Naive thymus-derived CD4-positive, alpha-beta T cell (primary cell): ENCODE measurements at regions of chr7 and their contacts with region 1.

Region 1: DNA sequence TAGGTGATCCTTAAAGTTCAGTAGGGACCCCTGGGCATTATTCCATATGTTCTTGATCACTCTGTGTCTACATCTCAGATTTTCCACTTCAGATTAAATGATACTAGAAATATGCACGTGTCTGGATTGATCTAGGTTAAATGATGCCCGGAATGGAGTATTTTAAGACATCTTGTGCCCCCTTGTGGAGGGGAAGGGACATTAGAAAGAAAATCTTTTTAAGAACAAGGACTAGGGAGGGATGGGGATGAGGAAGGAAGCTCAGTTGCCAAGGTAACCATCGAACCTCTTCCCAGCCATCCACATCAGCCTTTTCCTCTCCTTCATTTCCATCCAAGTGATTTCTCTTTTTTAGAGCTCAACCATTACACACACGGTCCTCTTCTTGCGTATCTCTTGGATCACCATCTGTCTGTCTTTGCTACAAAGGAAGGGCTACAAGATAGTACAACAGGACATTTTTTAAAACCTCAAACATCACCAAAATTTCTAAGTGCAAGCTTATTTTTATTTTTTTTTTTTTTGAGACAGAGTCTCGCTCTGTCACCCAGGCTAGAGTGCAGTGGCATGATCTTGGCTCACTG is 40.5 kb downstream of the PRSS2 start:
- DNase-seq: peak in 7 of 9 donors; percentile 73 to 86 (median 79)
- ATAC-seq: peak; percentile 19
- H3K4me3 ChIP-seq: no peak overlapping the region
- H3K4me3 Mint-ChIP-seq: peak overlapping the region; percentile 58 to 100 (median 76)
- H3K27ac ChIP-seq: peak overlapping the region; percentile 98
- H3K27ac Mint-ChIP-seq: peak overlapping the region; percentile 92 to 100 (median 100)
- H3K4me1 ChIP-seq: peaks cover 47 to 89% of the 10 kb centered on the region in 2 donors
- H3K4me1 Mint-ChIP-seq: peaks cover 57 to 100% (median 91%) of the 10 kb centered on the region in 7 donors
- H3K27me3 ChIP-seq: no peaks in the 10 kb centered on the region
- H3K27me3 Mint-ChIP-seq: peaks cover 0 to 6% (median 0%) of the 10 kb centered on the region in 5 donors

Region 2: GRCh38 chr7:141737834-141738591 is 1073.2 kb before region 1 on chr7 and contains the start of gene SSBP1:
- CTCF ChIA-PET with region 1: no interaction called
- POLR2A ChIA-PET with region 1: no interaction called
- intact Hi-C with region 1: loop called in 1 of 2 experiments (anchors 2 kb)
- DNase-seq: peak; percentile 72 to 95 (median 93)
- ATAC-seq: peak; percentile 94
- H3K4me3 ChIP-seq: peak within 1 kb of the TSS; percentile 84
- H3K4me3 Mint-ChIP-seq: peak within 1 kb of the TSS; percentile 92 to 100 (median 98)
- H3K27ac ChIP-seq: peak within 1 kb of the TSS; percentile 77
- H3K27ac Mint-ChIP-seq: peak within 1 kb of the TSS; percentile 95 to 99 (median 98)
- H3K4me1 ChIP-seq: peaks cover 21 to 22% of the 10 kb centered on the region in 2 donors
- H3K4me1 Mint-ChIP-seq: peaks cover 18 to 63% (median 56%) of the 10 kb centered on the region in 7 donors
- H3K27me3 ChIP-seq: no peaks in the 10 kb centered on the region
- H3K27me3 Mint-ChIP-seq: no peaks in the 10 kb centered on the region
- total RNA-seq, gene SSBP1: 86.4 to 148 (median 107) TPM

Region 3: DNA sequence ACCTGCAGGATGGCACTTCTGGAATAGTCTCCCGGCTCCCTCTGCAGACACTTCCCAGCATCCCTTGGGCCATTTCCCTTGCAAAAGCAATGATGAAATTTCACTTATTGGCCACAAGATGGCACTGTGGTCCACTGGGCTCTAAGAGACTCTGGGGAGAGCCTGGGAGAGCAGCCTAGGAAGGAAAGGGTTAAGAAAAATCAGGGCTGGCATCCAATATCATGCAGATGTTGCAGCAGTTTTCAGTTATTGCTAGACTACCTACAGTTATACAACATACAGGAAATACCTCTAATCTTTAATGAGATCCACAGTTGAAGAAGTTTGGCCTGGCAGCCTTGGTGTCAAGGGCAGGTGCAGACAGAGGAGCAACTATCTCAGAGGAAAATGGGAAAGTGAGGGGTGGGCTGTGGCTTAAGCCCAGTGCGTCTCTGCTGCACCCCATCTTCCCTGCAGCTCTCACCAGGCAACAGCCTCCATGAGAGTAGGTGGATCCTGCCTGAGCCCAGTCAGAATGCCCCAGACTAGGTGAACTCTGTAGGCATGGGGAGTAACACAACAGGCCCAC is 453.2 kb before region 1 on chr7:
- CTCF ChIA-PET with region 1: no interaction called
- POLR2A ChIA-PET with region 1: interaction called, 15 read pairs
- intact Hi-C with region 1: loop called in 1 of 2 experiments (anchors 1 kb)
- DNase-seq: peak in 8 of 9 donors; percentile 29 to 56 (median 44)
- ATAC-seq: peak; percentile 71
- H3K4me3 ChIP-seq: no peak overlapping the region
- H3K4me3 Mint-ChIP-seq: peak overlapping the region in 2 of 10 donors; percentile 21 to 26
- H3K27ac ChIP-seq: no peak overlapping the region
- H3K27ac Mint-ChIP-seq: peak overlapping the region in 5 of 9 donors; percentile 10 to 68 (median 35)
- H3K4me1 ChIP-seq: peaks cover 0 to 30% of the 10 kb centered on the region in 2 donors
- H3K4me1 Mint-ChIP-seq: peaks cover 13 to 58% (median 47%) of the 10 kb centered on the region in 7 donors
- H3K27me3 ChIP-seq: no peaks in the 10 kb centered on the region
- H3K27me3 Mint-ChIP-seq: peaks cover 0 to 39% (median 0%) of the 10 kb centered on the region in 5 donors

Region 4: GRCh38 chr7:142459551-142459963 is 351.7 kb before region 1 on chr7:
- CTCF ChIA-PET with region 1: interaction called, 5 read pairs
- POLR2A ChIA-PET with region 1: interaction called, 31 read pairs
- intact Hi-C with region 1: no loop called
- DNase-seq: peak in 5 of 9 donors; percentile 19 to 42 (median 34)
- ATAC-seq: peak; percentile 72
- H3K4me3 ChIP-seq: no peak overlapping the region
- H3K4me3 Mint-ChIP-seq: peak overlapping the region; percentile 12 to 83 (median 47)
- H3K27ac ChIP-seq: peak overlapping the region; percentile 46
- H3K27ac Mint-ChIP-seq: peak overlapping the region; percentile 24 to 92 (median 67)
- H3K4me1 ChIP-seq: peaks cover 4 to 42% of the 10 kb centered on the region in 2 donors
- H3K4me1 Mint-ChIP-seq: peaks cover 38 to 86% (median 81%) of the 10 kb centered on the region in 7 donors
- H3K27me3 ChIP-seq: no peaks in the 10 kb centered on the region
- H3K27me3 Mint-ChIP-seq: peaks cover 0 to 7% (median 0%) of the 10 kb centered on the region in 5 donors

Region 5: GRCh38 chr7:142603870-142604448 is 207.3 kb before region 1 on chr7:
- CTCF ChIA-PET with region 1: interaction called, 4 read pairs
- POLR2A ChIA-PET with region 1: interaction called, 17 read pairs
- intact Hi-C with region 1: loop called (anchors 1 kb)
- DNase-seq: peak in 8 of 9 donors; percentile 34 to 67 (median 56)
- ATAC-seq: peak; percentile 82
- H3K4me3 ChIP-seq: no peak overlapping the region
- H3K4me3 Mint-ChIP-seq: peak overlapping the region in 9 of 10 donors; percentile 38 to 66 (median 55)
- H3K27ac ChIP-seq: no peak overlapping the region
- H3K27ac Mint-ChIP-seq: peak overlapping the region in 6 of 9 donors; percentile 3 to 90 (median 58)
- H3K4me1 ChIP-seq: no peaks in the 10 kb centered on the region
- H3K4me1 Mint-ChIP-seq: peaks cover 0 to 18% (median 12%) of the 10 kb centered on the region in 7 donors
- H3K27me3 ChIP-seq: no peaks in the 10 kb centered on the region
- H3K27me3 Mint-ChIP-seq: peaks cover 0 to 19% (median 0%) of the 10 kb centered on the region in 5 donors

Region 6: GRCh38 chr7:142782922-142783900 is 28.0 kb before region 1 on chr7:
- CTCF ChIA-PET with region 1: interaction called, 314 read pairs
- POLR2A ChIA-PET with region 1: interaction called, 5,102 read pairs
- intact Hi-C with region 1: loop called (anchors 1 kb)
- DNase-seq: peak; percentile 54 to 84 (median 77)
- ATAC-seq: peak; percentile 74
- H3K4me3 ChIP-seq: peak overlapping the region; percentile 52
- H3K4me3 Mint-ChIP-seq: peak overlapping the region; percentile 70 to 99 (median 86)
- H3K27ac ChIP-seq: peak overlapping the region; percentile 98
- H3K27ac Mint-ChIP-seq: peak overlapping the region; percentile 75 to 100 (median 99)
- H3K4me1 ChIP-seq: peaks cover 0 to 5% of the 10 kb centered on the region in 2 donors
- H3K4me1 Mint-ChIP-seq: peaks cover 0 to 16% (median 10%) of the 10 kb centered on the region in 7 donors
- H3K27me3 ChIP-seq: no peaks in the 10 kb centered on the region
- H3K27me3 Mint-ChIP-seq: no peaks in the 10 kb centered on the region

Region 7: GRCh38 chr7:143248761-143249354 is 437.6 kb after region 1 on chr7:
- CTCF ChIA-PET with region 1: no interaction called
- POLR2A ChIA-PET with region 1: interaction called, 3 read pairs
- intact Hi-C with region 1: loop called (anchors 2 kb)
- DNase-seq: no peak
- ATAC-seq: no peak
- H3K4me3 ChIP-seq: peak overlapping the region; percentile 13
- H3K4me3 Mint-ChIP-seq: peak overlapping the region in 9 of 10 donors; percentile 12 to 68 (median 34)
- H3K27ac ChIP-seq: no peak overlapping the region
- H3K27ac Mint-ChIP-seq: peak overlapping the region; percentile 25 to 89 (median 80)
- H3K4me1 ChIP-seq: peaks cover 56 to 60% of the 10 kb centered on the region in 2 donors
- H3K4me1 Mint-ChIP-seq: peaks cover 60 to 99% (median 97%) of the 10 kb centered on the region in 7 donors
- H3K27me3 ChIP-seq: no peaks in the 10 kb centered on the region
- H3K27me3 Mint-ChIP-seq: no peaks in the 10 kb centered on the region